PC-3 (cell line): ENCODE measurements at regions of chr17 and their contacts with region 1.

Region 1: DNA sequence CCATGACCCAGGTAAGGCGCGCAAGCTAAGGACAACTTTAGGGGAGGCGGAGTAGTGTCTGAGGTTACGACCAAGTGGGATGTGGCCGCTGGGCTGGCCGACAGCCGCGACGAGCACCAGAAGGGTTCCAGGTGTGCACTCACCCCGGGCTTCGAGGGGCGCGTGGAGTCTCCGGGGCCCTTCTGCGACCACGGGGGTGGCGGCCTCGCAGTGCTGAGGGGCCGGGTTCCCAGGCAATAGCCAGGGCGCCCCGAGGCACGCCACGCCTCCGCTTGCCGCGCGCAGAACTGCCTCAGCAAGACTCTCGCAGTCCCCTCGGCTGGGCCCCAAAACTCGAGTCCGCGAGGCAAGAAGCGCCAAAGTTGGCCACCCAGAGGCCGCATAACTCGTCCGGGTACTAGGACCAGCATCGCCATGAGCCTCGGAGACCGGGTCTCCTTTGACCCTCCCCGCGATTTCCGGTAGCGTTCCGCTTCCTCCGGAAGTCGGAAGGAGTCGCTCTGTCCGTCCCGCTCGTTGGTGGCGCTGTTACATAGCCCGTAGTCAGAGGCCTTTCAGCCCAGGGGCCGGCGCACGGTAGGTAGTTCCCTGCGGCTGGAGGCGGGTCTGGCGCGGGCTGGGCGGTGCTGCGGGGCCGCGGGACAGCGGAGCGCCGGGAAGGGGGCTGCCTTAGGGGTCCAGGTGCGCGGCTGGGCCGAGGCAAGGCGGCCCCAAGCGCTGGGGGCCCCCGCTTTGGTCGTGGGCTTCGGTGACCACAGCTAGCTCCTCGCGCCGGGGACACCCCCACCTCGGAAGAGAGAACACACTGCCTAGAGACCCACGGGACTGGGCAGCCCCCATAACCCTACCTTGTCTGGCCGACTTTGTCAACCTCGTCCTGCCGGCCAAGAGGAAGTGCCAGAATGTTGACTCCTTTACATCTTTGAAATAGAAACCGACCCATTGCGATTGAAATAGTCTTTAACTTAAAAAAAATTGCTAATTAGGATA is at the starts of genes ADPRM and SCO1:
- DNase-seq: peak; percentile 90
- ATAC-seq: peak; percentile 99
- H3K4me3 ChIP-seq: peak within 1 kb of the TSS; percentile 88
- H3K27ac ChIP-seq: peak within 1 kb of the TSS; percentile 72
- H3K4me1 ChIP-seq: peaks cover 10% of the 10 kb centered on the region; the same call in 1 of the 2 replicates
- H3K27me3 ChIP-seq: no peaks in the 10 kb centered on the region
- CTCF ChIP-seq: peak; percentile 28; the same call in 1 of the 2 replicates
- total RNA-seq, gene ADPRM: 2.4 and 2.9 TPM in 2 replicates
- total RNA-seq, gene SCO1: 38.0 and 59.7 TPM in 2 replicates

Region 2: GRCh38 chr17:10482252-10482651 is 215.1 kb before region 1 on chr17:
- CTCF ChIA-PET with region 1: no interaction called
- POLR2A ChIA-PET with region 1: no interaction called
- intact Hi-C with region 1: no loop called
- DNase-seq: no peak
- ATAC-seq: no peak
- H3K4me3 ChIP-seq: no peak overlapping the region
- H3K27ac ChIP-seq: no peak overlapping the region
- H3K4me1 ChIP-seq: no peaks in the 10 kb centered on the region
- H3K27me3 ChIP-seq: no peaks in the 10 kb centered on the region
- CTCF ChIP-seq: no peak

Region 3: GRCh38 chr17:10668771-10669170 is 28.6 kb before region 1 on chr17:
- CTCF ChIA-PET with region 1: no interaction called
- POLR2A ChIA-PET with region 1: no interaction called
- intact Hi-C with region 1: no loop called
- DNase-seq: peak; percentile 6
- ATAC-seq: no peak
- H3K4me3 ChIP-seq: no peak overlapping the region
- H3K27ac ChIP-seq: no peak overlapping the region
- H3K4me1 ChIP-seq: no peaks in the 10 kb centered on the region
- H3K27me3 ChIP-seq: no peaks in the 10 kb centered on the region
- CTCF ChIP-seq: no peak

Region 4: DNA sequence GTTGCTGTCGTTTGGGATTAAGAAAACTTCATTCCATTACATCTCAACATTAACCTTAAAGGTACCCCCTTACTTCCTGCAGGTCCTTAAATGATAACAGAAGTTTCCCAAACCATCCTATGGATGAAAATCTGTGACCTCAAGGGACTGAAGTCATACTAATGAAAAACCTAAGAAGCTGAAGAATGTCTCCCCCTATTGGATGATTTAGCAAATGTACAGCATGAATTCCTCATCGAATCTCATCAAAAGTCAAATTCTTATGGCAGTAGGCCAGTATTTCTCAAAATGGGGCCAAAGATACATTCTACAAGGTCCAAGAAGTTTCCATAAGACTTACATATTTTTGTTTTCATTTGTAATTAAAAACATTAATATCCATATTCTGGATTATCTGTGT is 13.5 kb before region 1 on chr17:
- CTCF ChIA-PET with region 1: no interaction called
- POLR2A ChIA-PET with region 1: no interaction called
- intact Hi-C with region 1: no loop called
- DNase-seq: peak; percentile 33
- ATAC-seq: no peak
- H3K4me3 ChIP-seq: no peak overlapping the region
- H3K27ac ChIP-seq: no peak overlapping the region
- H3K4me1 ChIP-seq: no peaks in the 10 kb centered on the region
- H3K27me3 ChIP-seq: no peaks in the 10 kb centered on the region
- CTCF ChIP-seq: peak; percentile 62

Region 5: GRCh38 chr17:10729334-10730193 is 32.2 kb after region 1 on chr17 and contains the start of gene TMEM220:
- CTCF ChIA-PET with region 1: no interaction called
- POLR2A ChIA-PET with region 1: no interaction called
- intact Hi-C with region 1: loop called (anchors 2 kb)
- DNase-seq: peak; percentile 60
- ATAC-seq: peak; percentile 89
- H3K4me3 ChIP-seq: peak within 1 kb of the TSS; percentile 70
- H3K27ac ChIP-seq: peak within 1 kb of the TSS; percentile 30; the same call in 1 of the 2 replicates
- H3K4me1 ChIP-seq: peaks cover 3% of the 10 kb centered on the region; the same call in 1 of the 2 replicates
- H3K27me3 ChIP-seq: no peaks in the 10 kb centered on the region
- CTCF ChIP-seq: no peak
- total RNA-seq, gene TMEM220: 0.98 and 3.9 TPM in 2 replicates